ENCODE measurements at regions of chr6 and their contacts with region 1.

Region 1: DNA sequence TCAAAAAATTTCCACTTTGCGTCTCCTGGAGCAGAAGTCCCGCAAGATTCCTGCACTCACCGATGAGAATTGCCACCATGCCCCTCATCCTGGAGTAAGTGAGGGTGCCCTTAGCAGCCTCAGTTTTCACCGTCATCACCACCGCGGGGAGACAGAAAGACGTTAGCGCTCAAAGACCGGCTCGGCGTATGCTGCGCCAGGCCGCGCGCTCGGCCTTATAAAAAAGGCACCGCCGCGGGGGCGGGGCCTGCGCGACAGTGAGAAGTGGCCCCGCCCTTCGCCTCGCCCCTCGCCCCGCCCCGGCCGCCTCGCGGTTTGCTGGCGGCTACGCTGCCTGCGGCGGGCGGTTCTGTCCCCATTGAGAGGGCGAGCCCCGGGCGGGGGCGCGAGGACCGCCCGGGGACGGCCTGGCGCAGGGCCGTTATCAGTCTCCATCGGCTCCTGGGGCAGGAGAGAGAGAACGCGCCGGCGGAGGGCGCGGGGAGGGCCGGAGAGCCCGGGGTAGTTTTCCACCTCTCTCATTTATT is 122.3 kb upstream of the SLC2A12 start:
- DNase-seq: peak; percentile 93 to 97
- ATAC-seq: peak; percentile 77 to 84 (median 80)
- H3K4me3 ChIP-seq: peak overlapping the region; percentile 90
- H3K27ac ChIP-seq: peak overlapping the region; percentile 98
- H3K4me1 ChIP-seq: peaks cover 44% of the 10 kb centered on the region
- H3K27me3 ChIP-seq: no peaks in the 10 kb centered on the region
- CTCF ChIP-seq: peak; percentile 7

Region 2: GRCh38 chr6:132483779-132484679 is 1690.7 kb before region 1 on chr6:
- intact Hi-C with region 1: no loop called
- DNase-seq: no peak
- ATAC-seq: peak; percentile 52 to 94 (median 68)
- H3K4me3 ChIP-seq: no peak overlapping the region
- H3K27ac ChIP-seq: no peak overlapping the region
- H3K4me1 ChIP-seq: no peaks in the 10 kb centered on the region
- H3K27me3 ChIP-seq: no peaks in the 10 kb centered on the region
- CTCF ChIP-seq: peak; percentile 77

Region 3: DNA sequence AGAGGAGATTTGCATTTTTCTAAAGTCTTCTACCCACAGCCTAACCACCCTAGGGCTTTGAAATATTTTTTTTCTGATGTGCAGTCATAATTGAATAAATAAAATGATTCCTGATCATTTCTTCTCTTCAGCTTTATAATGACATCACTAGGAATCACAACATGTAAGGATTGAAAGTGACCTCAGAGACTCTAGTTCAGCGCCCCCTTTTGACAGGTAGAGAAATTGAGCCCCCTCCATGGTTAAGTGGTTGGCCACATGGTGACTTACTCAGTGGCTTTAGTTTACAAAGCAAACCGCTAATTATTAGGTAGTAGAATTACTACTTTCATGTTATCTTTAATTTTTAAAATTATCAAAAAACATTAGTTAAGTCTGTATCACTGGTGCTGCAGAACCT is 109.0 kb before region 1 on chr6:
- intact Hi-C with region 1: no loop called
- DNase-seq: no peak
- ATAC-seq: no peak
- H3K4me3 ChIP-seq: no peak overlapping the region
- H3K27ac ChIP-seq: no peak overlapping the region
- H3K4me1 ChIP-seq: peaks cover 8% of the 10 kb centered on the region
- H3K27me3 ChIP-seq: no peaks in the 10 kb centered on the region
- CTCF ChIP-seq: peak; percentile 22

Region 4: GRCh38 chr6:134247231-134247833 is 72.6 kb after region 1 on chr6:
- intact Hi-C with region 1: loop called (anchors 5 kb)
- DNase-seq: no peak
- ATAC-seq: peak; percentile 91 to 96 (median 93)
- H3K4me3 ChIP-seq: no peak overlapping the region
- H3K27ac ChIP-seq: peak overlapping the region; percentile 83
- H3K4me1 ChIP-seq: peaks cover 31% of the 10 kb centered on the region
- H3K27me3 ChIP-seq: no peaks in the 10 kb centered on the region
- CTCF ChIP-seq: no peak

Region 5: GRCh38 chr6:134464690-134465411 is 290.1 kb after region 1 on chr6:
- intact Hi-C with region 1: loop called (anchors 2 to 5 kb)
- DNase-seq: peak; percentile 42 to 84
- ATAC-seq: peak; percentile 92 to 98 (median 95)
- H3K4me3 ChIP-seq: no peak overlapping the region
- H3K27ac ChIP-seq: peak overlapping the region; percentile 87
- H3K4me1 ChIP-seq: peaks cover 50% of the 10 kb centered on the region
- H3K27me3 ChIP-seq: no peaks in the 10 kb centered on the region
- CTCF ChIP-seq: no peak

Region 6: DNA sequence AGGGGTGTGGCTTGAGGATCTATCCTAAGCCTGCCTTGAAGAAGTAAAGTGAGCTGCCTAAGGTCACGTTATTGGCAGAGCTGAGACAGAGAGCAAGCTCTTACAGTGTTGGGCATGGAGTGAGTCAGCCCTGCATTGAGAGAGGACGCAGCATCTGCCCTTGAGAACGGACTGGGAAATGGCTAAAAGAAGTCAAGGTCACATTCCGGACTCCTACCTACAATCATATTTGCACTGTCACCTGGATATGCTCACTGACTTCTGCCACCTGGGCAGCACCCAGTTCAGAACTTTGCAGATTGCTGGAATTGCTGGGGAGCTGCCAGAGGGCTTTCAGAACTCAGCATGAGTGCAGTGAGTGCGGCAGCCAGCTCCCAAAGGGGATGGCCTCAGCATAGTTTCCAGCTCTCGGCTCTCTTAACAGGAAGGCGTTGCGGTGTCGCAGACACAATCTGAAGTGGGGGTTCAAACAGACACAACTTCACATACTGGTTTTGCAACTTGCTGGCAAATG is 342.5 kb after region 1 on chr6:
- intact Hi-C with region 1: loop called in 1 of 2 experiments (anchors 2 kb)
- DNase-seq: peak; percentile 67 to 73
- ATAC-seq: peak; percentile 97 to 99 (median 98)
- H3K4me3 ChIP-seq: peak overlapping the region; percentile 24
- H3K27ac ChIP-seq: peak overlapping the region; percentile 69
- H3K4me1 ChIP-seq: peaks cover 7% of the 10 kb centered on the region
- H3K27me3 ChIP-seq: no peaks in the 10 kb centered on the region
- CTCF ChIP-seq: no peak

Region 7: GRCh38 chr6:134822920-134823709 is 648.4 kb after region 1 on chr6:
- intact Hi-C with region 1: loop called (anchors 1 to 2 kb)
- DNase-seq: no peak
- ATAC-seq: peak; percentile 66 to 84 (median 70)
- H3K4me3 ChIP-seq: no peak overlapping the region
- H3K27ac ChIP-seq: peak overlapping the region; percentile 3
- H3K4me1 ChIP-seq: peaks cover 5% of the 10 kb centered on the region
- H3K27me3 ChIP-seq: no peaks in the 10 kb centered on the region
- CTCF ChIP-seq: peak; percentile 86

Region 8: GRCh38 chr6:134938896-134939295 is 764.2 kb after region 1 on chr6:
- intact Hi-C with region 1: loop called in 1 of 2 experiments (anchors 5 kb)
- DNase-seq: no peak
- ATAC-seq: no peak
- H3K4me3 ChIP-seq: no peak overlapping the region
- H3K27ac ChIP-seq: no peak overlapping the region
- H3K4me1 ChIP-seq: no peaks in the 10 kb centered on the region
- H3K27me3 ChIP-seq: no peaks in the 10 kb centered on the region
- CTCF ChIP-seq: no peak

Measured in psoas muscle (tissue), 8 donors.